ENCODE measurements at regions of chr2 and their contacts with region 1.

Region 1: DNA sequence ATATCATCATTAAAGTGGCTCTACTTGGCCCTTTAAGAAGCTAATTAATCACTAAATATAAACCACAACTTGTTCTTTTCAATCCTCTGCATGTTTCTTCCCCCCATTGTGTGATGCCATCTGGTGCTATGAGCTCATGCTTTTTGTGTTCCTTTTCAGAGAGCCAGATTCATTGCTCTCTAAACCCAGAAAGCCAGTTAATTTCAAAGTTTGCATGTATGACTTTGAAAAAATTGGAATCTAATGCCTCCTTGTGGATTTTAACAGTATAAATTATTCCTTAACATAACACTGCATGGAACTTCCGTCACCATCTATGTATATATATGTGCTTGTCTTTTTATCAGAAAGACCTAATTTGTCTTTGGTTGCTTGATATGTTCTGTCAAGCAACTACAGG is 31.1 kb downstream of the TMEM178A start:
- H3K4me3 ChIP-seq: no peak overlapping the region
- H3K27ac ChIP-seq: no peak overlapping the region
- H3K4me1 ChIP-seq: peaks cover 3% of the 10 kb centered on the region; the same call in 1 of the 2 replicates
- CTCF ChIP-seq: no peak

Region 2: GRCh38 chr2:39379643-39380524 is 317.0 kb before region 1 on chr2:
- CTCF ChIA-PET with region 1: interaction called, 13 read pairs
- POLR2A ChIA-PET with region 1: no interaction called
- H3K4me3 ChIP-seq: no peak overlapping the region
- H3K27ac ChIP-seq: no peak overlapping the region
- H3K4me1 ChIP-seq: peaks cover 5% of the 10 kb centered on the region; the same call in 1 of the 2 replicates
- CTCF ChIP-seq: peak; percentile 44; the same call in 1 of the 2 replicates

Region 3: GRCh38 chr2:39513641-39514094 is 183.2 kb before region 1 on chr2:
- CTCF ChIA-PET with region 1: interaction called, 26 read pairs
- POLR2A ChIA-PET with region 1: no interaction called
- H3K4me3 ChIP-seq: no peak overlapping the region
- H3K27ac ChIP-seq: no peak overlapping the region
- H3K4me1 ChIP-seq: peaks cover 3% of the 10 kb centered on the region; the same call in 1 of the 2 replicates
- CTCF ChIP-seq: peak; percentile 51; the same call in 1 of the 2 replicates

Region 4: DNA sequence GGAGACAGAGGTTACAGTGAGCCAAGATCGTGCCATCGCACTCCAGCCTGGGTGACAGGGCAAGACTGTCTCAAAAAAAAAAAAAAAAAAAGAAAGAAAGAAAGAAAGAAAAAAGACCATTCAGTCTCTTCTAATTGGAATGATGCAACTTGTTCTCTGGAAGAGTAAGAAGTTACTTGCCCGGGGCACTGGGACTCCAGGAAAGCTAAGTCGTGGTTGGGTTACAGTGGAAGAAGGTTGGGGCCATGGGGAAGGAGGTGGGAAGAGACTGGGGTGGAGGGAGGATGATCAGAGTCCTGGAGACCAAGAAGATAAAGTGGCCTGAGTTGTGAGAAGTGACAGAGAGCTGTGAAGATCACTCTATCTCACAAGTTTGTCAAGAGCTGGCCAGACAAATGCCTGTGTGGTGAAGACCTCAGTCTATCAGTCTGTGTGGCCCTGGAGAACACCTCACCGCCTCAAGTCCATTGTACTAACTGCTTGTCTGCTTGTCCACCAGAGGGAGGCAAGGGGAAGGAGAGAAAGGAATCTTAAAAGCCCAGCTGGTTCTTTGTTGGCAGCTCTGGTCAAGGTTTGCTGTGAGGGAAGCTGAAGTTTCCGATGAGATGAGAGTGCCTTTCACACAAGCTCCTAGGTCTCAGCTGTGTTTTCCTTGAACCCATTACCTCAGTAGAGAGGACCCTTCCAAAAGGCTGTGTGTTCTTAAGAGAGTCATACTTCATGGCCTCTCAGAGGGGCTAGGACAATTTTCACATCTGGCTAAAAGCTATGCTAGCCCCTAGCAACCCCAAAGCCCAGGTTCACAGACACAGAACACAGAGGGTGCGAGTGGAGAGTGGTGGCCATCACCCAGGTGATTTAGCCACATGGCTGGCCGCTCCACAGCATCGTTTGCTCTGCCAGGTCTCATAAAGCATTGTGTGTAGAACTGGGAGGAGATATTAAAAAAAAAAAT is 103.1 kb before region 1 on chr2:
- CTCF ChIA-PET with region 1: interaction called, 38 read pairs
- POLR2A ChIA-PET with region 1: no interaction called
- H3K4me3 ChIP-seq: no peak overlapping the region
- H3K27ac ChIP-seq: no peak overlapping the region
- H3K4me1 ChIP-seq: no peaks in the 10 kb centered on the region
- CTCF ChIP-seq: peak; percentile 62

Measured in HEK293 (cell line).